OCI-LY7 (cell line): ENCODE measurements at regions of chr14 and their contacts with region 1.

Region 1: GRCh38 chr14:22852940-22853767 is 16.8 kb downstream of the MMP14 start:
- DNase-seq: peak; percentile 90
- H3K4me3 ChIP-seq: peak overlapping the region; percentile 66
- H3K27ac ChIP-seq: peak overlapping the region; percentile 48
- H3K4me1 ChIP-seq: peaks cover 14% of the 10 kb centered on the region
- CTCF ChIP-seq: peak; percentile 93

Region 2: DNA sequence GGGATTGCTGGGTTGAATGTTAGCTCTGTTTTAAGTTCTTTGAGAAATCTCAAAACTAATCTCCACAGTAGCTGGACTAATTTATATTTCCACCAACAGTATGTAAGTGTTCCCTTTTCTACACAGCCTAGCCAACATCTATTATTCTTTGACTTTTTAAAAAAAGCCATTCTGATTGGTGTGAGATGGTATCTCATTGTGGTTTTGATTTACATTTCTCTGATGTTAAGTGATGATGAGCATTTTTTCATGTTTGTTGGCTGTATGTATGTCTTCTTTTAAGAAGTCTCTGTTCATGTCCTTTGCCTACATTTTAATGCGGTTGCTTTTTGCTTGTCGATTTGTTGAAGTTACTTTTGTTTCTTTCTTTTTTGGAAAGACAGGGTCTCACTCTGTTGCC is 878.4 kb before region 1 on chr14:
- CTCF ChIA-PET with region 1: no interaction called
- POLR2A ChIA-PET with region 1: no interaction called
- intact Hi-C with region 1: no loop called
- DNase-seq: no peak
- H3K4me3 ChIP-seq: no peak overlapping the region
- H3K27ac ChIP-seq: no peak overlapping the region
- H3K4me1 ChIP-seq: no peaks in the 10 kb centered on the region
- CTCF ChIP-seq: no peak

Region 3: GRCh38 chr14:22386924-22387775 is 466.0 kb before region 1 on chr14:
- CTCF ChIA-PET with region 1: no interaction called
- POLR2A ChIA-PET with region 1: no interaction called
- intact Hi-C with region 1: loop called (anchors 1 kb)
- DNase-seq: peak; percentile 93
- H3K4me3 ChIP-seq: peak overlapping the region; percentile 33
- H3K27ac ChIP-seq: peak overlapping the region; percentile 49
- H3K4me1 ChIP-seq: peaks cover 94% of the 10 kb centered on the region
- CTCF ChIP-seq: peak; percentile 94

Region 4: DNA sequence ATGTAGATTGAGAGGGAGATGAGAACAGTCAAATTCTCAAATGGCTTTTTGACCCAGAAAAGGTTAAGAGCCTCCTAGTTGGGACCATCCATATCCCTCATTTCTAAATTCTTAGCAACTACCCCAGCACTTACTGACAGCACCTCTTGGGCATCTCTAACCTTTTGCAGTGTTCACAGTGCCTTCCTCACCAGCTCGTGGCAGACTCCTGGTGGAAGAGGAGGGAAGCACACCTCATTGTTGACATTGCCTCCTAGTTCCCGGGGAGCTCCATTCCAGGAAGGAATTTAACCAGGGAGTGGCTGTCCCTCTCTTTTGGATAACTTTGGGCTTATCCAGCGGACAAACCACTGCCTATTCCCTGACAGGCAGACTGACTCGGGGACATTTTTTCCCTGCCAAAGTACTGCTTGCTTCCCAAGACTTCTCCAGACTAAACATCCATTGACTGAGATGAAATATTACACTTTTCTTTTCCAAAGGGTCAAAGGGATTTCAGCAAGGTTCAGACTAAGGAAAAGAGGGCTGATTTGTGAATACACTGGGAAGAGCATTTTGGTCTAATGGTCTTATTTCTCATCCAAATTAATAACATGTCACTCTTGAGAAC is 200.0 kb before region 1 on chr14:
- CTCF ChIA-PET with region 1: interaction called, 7 read pairs
- POLR2A ChIA-PET with region 1: no interaction called
- intact Hi-C with region 1: loop called (anchors 1 kb)
- DNase-seq: peak; percentile 72
- H3K4me3 ChIP-seq: no peak overlapping the region
- H3K27ac ChIP-seq: no peak overlapping the region
- H3K4me1 ChIP-seq: no peaks in the 10 kb centered on the region
- CTCF ChIP-seq: peak; percentile 84

Region 5: DNA sequence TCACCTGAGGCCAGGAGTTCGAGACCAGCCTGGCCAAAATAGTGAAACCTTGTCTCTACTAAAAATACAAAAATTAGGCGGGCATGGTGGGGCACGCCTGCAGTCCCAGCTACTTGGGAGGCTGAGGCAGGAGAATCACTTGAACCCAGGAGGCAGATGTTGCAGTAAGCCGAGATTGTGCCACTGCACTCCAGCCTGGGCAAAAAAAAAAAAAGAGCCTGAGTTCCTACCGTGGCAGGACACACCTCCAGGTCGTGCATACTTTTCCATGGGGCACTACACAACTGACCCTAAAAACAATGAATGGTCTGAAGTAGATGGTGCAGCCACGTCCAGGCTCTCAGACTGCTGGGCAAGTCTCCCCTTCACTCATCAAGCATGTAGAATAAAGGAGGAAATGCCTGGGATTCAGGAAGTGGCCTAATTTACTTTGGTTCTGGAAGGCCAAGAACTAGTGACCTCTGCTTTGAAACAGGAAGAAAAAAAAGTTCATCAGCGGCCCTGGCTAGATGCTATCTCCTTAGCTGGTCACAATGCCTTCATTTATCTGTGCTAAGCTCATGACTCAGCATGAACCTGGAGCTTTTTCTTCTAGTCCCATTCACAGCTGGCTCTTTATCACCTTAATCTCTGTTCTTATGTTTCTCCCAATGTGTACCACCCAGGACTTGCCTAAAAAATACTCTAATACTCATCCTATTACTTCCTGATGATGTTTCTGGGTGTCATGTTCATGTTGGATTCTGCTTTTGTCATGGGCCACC is 153.2 kb before region 1 on chr14:
- CTCF ChIA-PET with region 1: no interaction called
- POLR2A ChIA-PET with region 1: no interaction called
- intact Hi-C with region 1: no loop called
- DNase-seq: no peak
- H3K4me3 ChIP-seq: no peak overlapping the region
- H3K27ac ChIP-seq: no peak overlapping the region
- H3K4me1 ChIP-seq: no peaks in the 10 kb centered on the region
- CTCF ChIP-seq: no peak

Region 6: DNA sequence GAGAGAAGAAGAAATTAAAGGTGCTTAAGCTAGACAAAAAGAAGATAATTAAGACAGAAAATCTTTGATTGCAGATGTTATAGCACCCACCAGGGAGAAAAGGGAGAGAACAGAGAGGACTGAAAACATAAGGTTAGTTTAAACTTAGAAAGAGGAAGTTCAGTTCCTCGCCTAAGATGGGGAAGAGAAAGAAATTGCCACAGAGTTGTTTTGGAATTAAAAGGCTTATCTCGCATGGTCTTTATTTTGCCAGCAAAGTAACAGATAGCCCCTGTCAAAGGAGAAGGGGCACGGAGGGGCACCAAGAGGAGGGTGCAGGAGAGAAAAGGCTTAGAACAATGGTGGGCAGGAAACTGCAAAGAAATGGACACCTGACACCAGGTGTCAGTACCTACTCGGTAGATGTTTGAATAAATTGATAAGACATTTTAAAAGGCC is 104.5 kb before region 1 on chr14:
- CTCF ChIA-PET with region 1: interaction called, 3 read pairs
- POLR2A ChIA-PET with region 1: interaction called, 5 read pairs
- intact Hi-C with region 1: loop called (anchors 1 kb)
- DNase-seq: peak; percentile 67
- H3K4me3 ChIP-seq: peak overlapping the region; percentile 46
- H3K27ac ChIP-seq: peak overlapping the region; percentile 73
- H3K4me1 ChIP-seq: peaks cover 29% of the 10 kb centered on the region
- CTCF ChIP-seq: peak; percentile 64

Region 7: GRCh38 chr14:22822571-22823098 is 30.5 kb before region 1 on chr14:
- CTCF ChIA-PET with region 1: interaction called, 15 read pairs
- POLR2A ChIA-PET with region 1: interaction called, 42 read pairs
- intact Hi-C with region 1: loop called (anchors 1 kb)
- DNase-seq: peak; percentile 83
- H3K4me3 ChIP-seq: peak overlapping the region; percentile 58
- H3K27ac ChIP-seq: peak overlapping the region; percentile 82
- H3K4me1 ChIP-seq: peaks cover 78% of the 10 kb centered on the region
- CTCF ChIP-seq: peak; percentile 90

Region 8: GRCh38 chr14:22900081-22900799 is 47.1 kb after region 1 on chr14:
- CTCF ChIA-PET with region 1: no interaction called
- POLR2A ChIA-PET with region 1: interaction called, 3 read pairs
- intact Hi-C with region 1: loop called (anchors 1 kb)
- DNase-seq: peak; percentile 83
- H3K4me3 ChIP-seq: no peak overlapping the region
- H3K27ac ChIP-seq: peak overlapping the region; percentile 14
- H3K4me1 ChIP-seq: peaks cover 10% of the 10 kb centered on the region
- CTCF ChIP-seq: peak; percentile 82